Panc1 (cell line): ENCODE measurements at regions of chr11 and their contacts with region 1.

Region 1: DNA sequence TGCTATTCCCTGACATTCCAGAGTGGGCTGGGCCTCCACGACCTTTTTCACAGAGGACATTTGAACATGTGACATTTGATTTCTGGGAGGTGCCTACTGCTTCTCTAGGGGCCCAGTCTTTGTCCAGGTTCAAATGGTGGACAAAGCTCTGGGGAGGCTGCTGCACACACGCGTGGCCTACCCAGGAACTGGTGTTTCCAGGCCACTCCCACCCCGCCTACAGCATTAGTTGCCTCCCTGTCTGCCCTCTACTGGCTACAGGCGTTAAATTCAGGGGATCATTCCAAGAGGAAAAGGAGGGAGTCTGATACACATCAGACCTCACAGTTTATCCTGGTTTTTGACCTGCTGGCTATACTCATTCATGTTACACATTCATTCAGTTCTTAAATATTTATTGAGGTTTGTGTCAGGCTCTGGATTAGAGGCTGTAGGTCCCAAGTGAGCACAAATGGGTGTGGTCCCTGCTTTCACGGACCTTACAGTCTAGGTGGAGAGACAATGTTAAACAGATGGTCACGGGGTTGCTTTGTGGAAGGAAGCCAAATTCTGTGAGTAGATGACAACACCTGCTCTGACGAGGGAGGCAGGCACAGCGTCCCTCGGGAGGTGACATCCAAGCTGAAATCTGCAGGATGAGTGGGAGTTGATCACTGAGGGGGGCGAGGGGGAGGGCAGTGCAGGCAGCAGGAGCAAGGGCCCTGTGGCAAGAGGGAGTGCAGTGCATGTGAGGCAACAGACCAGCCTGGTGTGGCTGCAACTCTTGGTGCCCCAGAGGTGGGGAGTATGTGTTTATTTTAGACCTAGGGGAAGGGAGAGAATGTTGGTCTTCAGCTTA is 11.8 kb downstream of the TUB start:
- DNase-seq: no peak
- ATAC-seq: peak; percentile 79
- H3K4me3 ChIP-seq: no peak overlapping the region
- H3K27ac ChIP-seq: no peak overlapping the region
- H3K4me1 ChIP-seq: no peaks in the 10 kb centered on the region
- H3K27me3 ChIP-seq: no peaks in the 10 kb centered on the region
- CTCF ChIP-seq: peak; percentile 89

Region 2: GRCh38 chr11:7548659-7549274 is 544.0 kb before region 1 on chr11:
- CTCF ChIA-PET with region 1: interaction called, 10 read pairs
- POLR2A ChIA-PET with region 1: no interaction called
- in situ Hi-C with region 1: no loop called
- intact Hi-C with region 1: no loop called
- DNase-seq: no peak
- ATAC-seq: peak; percentile 80
- H3K4me3 ChIP-seq: no peak overlapping the region
- H3K27ac ChIP-seq: no peak overlapping the region
- H3K4me1 ChIP-seq: no peaks in the 10 kb centered on the region
- H3K27me3 ChIP-seq: no peaks in the 10 kb centered on the region
- CTCF ChIP-seq: peak; percentile 71

Region 3: DNA sequence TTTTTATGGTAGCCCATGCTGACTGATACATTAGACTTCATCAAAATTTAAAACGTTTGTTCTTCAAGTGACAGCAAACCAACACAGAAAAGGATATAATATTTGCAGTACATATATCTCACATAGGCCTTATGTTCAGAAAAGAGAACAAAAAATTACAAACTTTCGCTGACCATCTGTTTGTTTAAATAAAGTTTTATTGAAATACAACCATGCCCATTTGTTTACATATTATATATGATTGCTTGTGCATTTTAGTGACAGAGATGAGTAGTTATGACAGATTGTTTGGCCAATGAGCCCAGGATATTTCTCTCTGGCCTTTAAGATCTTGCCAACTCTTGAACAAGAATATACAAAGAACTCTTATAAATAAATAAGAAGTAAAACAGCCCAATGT is 288.6 kb before region 1 on chr11:
- CTCF ChIA-PET with region 1: interaction called, 11 read pairs
- POLR2A ChIA-PET with region 1: no interaction called
- in situ Hi-C with region 1: no loop called
- intact Hi-C with region 1: no loop called
- DNase-seq: no peak
- ATAC-seq: no peak
- H3K4me3 ChIP-seq: no peak overlapping the region
- H3K27ac ChIP-seq: no peak overlapping the region
- H3K4me1 ChIP-seq: no peaks in the 10 kb centered on the region
- H3K27me3 ChIP-seq: no peaks in the 10 kb centered on the region
- CTCF ChIP-seq: no peak

Region 4: DNA sequence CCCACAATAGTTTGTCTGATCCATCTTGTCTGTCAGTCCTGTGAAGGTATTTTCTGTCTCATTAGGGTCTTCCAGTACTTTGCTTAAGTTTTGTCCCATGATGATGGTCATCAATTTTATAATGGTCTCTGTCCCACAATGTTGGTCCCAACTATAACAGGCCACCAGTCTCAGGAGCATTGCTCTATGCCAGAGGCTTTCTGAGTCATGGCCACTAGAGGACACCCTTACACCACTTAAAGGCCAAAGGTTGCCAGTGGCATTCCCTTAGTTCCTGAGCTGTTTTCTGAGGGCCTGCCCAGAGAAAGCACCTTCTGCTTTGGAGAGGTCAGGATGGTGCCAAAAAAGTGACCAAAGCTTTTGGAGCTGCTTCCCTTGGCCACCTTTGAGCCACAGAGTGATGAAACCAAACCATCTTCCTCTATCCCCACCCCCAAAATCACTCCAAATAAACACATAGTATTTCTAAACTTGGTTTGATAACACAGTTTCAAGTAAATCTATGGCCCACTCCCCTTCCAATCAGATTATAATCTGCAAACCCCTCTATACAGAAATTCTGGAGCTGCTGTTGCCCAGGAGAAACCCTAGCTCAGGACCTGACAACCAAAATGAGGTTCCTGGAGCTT is 86.3 kb before region 1 on chr11:
- CTCF ChIA-PET with region 1: interaction called, 22 read pairs
- POLR2A ChIA-PET with region 1: no interaction called
- in situ Hi-C with region 1: no loop called
- intact Hi-C with region 1: loop called (anchors 1 kb)
- DNase-seq: peak; percentile 77
- ATAC-seq: peak; percentile 95
- H3K4me3 ChIP-seq: no peak overlapping the region
- H3K27ac ChIP-seq: no peak overlapping the region
- H3K4me1 ChIP-seq: no peaks in the 10 kb centered on the region
- H3K27me3 ChIP-seq: peaks cover 2% of the 10 kb centered on the region; the same call in 1 of the 2 replicates
- CTCF ChIP-seq: peak; percentile 98

Region 5: GRCh38 chr11:8033305-8034105 is 59.3 kb before region 1 on chr11:
- CTCF ChIA-PET with region 1: interaction called, 45 read pairs
- POLR2A ChIA-PET with region 1: no interaction called
- in situ Hi-C with region 1: no loop called
- intact Hi-C with region 1: no loop called
- DNase-seq: peak; percentile 45
- ATAC-seq: peak; percentile 90
- H3K4me3 ChIP-seq: no peak overlapping the region
- H3K27ac ChIP-seq: no peak overlapping the region
- H3K4me1 ChIP-seq: no peaks in the 10 kb centered on the region
- H3K27me3 ChIP-seq: peaks cover 2% of the 10 kb centered on the region
- CTCF ChIP-seq: peak; percentile 99

Region 6: DNA sequence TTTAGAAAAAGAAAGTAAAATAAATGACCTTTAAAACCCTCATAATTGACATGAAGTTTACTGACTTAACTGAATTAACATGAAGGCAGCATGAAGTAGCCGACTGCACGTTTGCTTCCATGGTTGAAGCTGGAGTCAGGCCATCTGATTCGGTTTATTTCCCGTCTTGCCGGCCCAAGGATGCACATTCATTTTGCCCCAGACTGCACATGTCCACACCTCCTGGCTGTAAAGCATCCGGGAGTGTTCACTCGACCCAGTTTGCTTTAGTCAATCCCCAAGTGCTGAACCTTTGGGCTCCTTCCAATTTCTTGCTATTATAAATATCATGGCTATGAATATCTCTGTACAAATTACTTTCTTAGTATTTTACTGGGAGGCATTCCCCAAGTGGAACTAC is 29.5 kb before region 1 on chr11:
- CTCF ChIA-PET with region 1: no interaction called
- POLR2A ChIA-PET with region 1: no interaction called
- in situ Hi-C with region 1: no loop called
- intact Hi-C with region 1: no loop called
- DNase-seq: no peak
- ATAC-seq: no peak
- H3K4me3 ChIP-seq: no peak overlapping the region
- H3K27ac ChIP-seq: no peak overlapping the region
- H3K4me1 ChIP-seq: no peaks in the 10 kb centered on the region
- H3K27me3 ChIP-seq: no peaks in the 10 kb centered on the region; the same call in 1 of the 2 replicates
- CTCF ChIP-seq: no peak

Region 7: DNA sequence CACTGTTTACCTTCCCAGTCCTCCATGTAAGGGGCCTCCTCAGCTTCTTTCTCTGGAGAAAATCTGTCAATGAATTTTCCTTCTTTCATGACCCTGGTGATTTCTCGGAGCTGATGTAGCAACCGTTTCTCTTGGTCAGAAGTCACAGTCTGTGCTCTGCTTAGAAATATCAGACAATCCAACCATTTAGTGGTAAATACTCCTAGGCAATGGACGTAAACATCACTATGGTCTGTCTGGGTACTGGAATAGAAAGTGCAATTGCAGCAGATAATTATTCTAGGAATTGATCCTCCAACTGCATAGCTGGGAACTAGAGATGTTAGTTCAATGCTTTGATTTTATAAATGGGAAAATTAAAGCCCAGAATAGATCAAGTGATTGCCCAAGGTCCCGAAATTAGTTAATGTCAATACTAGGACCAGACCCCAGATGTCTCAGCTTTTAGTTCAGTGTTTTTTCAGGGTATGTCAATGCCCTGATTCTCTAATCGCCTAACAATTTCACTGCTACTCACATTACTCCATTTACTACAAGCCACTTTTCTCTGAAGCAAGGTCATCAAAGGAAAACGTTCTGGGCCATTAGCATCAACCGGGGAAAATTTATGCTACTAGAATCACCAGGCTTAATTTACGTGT is 34.0 kb after region 1 on chr11:
- CTCF ChIA-PET with region 1: interaction called, 10 read pairs
- POLR2A ChIA-PET with region 1: no interaction called
- in situ Hi-C with region 1: no loop called
- intact Hi-C with region 1: no loop called
- DNase-seq: no peak
- ATAC-seq: no peak
- H3K4me3 ChIP-seq: no peak overlapping the region
- H3K27ac ChIP-seq: no peak overlapping the region
- H3K4me1 ChIP-seq: no peaks in the 10 kb centered on the region
- H3K27me3 ChIP-seq: no peaks in the 10 kb centered on the region; the same call in 1 of the 2 replicates
- CTCF ChIP-seq: no peak